GM10248 (cell line): ENCODE measurements at regions of chr6 and their contacts with region 1.

Region 1: GRCh38 chr6:122530440-122531046 is 58.9 kb upstream of the SERINC1 start:
- DNase-seq: peak; percentile 39
- CTCF ChIP-seq: peak; percentile 88

Region 2: DNA sequence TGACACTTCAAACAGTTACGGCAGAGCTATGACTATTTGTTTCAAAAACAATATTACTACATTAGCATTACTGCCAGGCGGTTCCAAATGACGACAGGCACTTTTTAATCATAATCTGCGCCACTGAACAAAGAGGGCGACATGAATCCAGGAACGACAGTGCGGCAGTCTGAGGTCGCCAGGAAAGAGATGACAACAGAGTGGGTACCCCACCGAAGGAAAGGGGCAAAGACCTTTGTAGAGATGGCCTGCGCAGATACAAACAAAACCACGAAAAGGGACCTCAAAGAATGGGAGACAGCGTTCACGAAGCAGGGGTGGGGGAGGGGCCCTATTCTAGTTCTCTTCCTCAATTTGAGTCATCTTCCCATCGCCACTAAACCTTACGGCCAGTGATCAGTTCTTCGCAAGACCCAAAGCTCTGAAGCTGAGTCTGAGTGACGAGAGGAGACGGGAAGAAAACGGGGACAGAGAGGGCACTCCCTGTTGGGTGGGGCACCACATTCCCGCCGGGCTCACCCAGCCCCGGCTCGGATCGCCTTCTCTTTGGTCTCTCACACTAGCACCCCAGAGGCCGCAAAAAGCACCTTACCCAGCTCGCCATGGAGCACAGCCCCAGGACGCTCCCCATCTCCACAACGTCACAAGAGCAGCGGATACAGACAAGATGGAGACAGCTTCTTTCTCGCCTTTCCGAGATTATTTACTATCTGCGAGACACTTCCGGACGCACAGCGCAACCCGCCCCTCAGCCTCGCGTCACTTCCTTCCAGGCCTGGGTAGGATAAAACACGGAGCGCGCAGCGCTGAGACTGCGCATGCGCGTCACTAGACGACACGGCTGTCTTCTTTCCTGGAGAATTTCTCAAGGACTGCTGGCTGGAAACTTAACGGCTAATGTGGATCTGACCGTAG is 59.2 kb before region 1 on chr6 and contains the start of gene SERINC1:
- CTCF ChIA-PET with region 1: interaction called, 19 read pairs
- POLR2A ChIA-PET with region 1: no interaction called
- DNase-seq: peak; percentile 91
- CTCF ChIP-seq: no peak

Region 3: DNA sequence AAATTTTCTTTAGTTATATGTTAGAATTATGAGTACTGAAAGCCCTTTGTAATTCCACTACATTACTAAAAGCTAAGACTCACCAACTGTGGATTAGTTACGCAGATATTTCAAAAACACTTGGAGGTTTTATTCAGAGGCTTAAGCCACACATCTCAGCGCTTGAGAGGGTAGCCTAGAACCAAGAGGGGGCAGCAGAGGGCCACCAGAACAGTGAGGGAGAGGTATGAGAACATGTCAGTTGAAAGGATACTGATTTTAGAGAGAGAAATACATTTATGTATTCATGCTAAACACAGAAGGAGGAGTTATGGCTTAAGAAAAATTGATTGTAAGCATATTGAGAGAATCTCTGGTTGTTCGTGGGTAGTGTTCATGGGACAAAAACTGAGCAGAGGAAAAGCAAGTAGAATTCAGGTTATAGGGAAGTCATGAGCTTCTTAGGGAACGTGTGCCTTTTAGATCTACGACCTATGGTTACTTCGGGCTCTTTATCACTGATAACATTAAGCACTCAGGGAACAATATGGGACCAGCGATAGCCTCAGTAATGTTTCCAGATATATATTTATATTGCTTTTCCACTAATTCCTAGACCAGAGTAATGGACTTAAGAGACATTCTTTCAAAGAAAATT is 38.5 kb before region 1 on chr6:
- CTCF ChIA-PET with region 1: interaction called, 241 read pairs
- POLR2A ChIA-PET with region 1: no interaction called
- DNase-seq: peak; percentile 60
- CTCF ChIP-seq: peak; percentile 91

Region 4: GRCh38 chr6:122511193-122511924 is 19.2 kb before region 1 on chr6:
- CTCF ChIA-PET with region 1: interaction called, 78 read pairs
- POLR2A ChIA-PET with region 1: no interaction called
- DNase-seq: no peak
- CTCF ChIP-seq: no peak

Region 5: GRCh38 chr6:122548281-122548680 is 17.7 kb after region 1 on chr6:
- CTCF ChIA-PET with region 1: interaction called, 17 read pairs
- POLR2A ChIA-PET with region 1: no interaction called
- DNase-seq: no peak
- CTCF ChIP-seq: no peak